Naive thymus-derived CD4-positive, alpha-beta T cell (primary cell): ENCODE measurements at regions of chr3 and their contacts with region 1.

Region 1: GRCh38 chr3:32460031-32460749 is 42.5 kb downstream of the CMTM6 start:
- DNase-seq: peak; percentile 52 to 95 (median 94)
- ATAC-seq: peak; percentile 87
- H3K4me3 ChIP-seq: peak overlapping the region; percentile 34
- H3K4me3 Mint-ChIP-seq: peak overlapping the region in 5 of 10 donors; percentile 25 to 92 (median 87)
- H3K27ac ChIP-seq: peak overlapping the region; percentile 97
- H3K27ac Mint-ChIP-seq: no peak overlapping the region
- H3K4me1 ChIP-seq: peaks cover 71 to 77% of the 10 kb centered on the region in 2 donors
- H3K4me1 Mint-ChIP-seq: peaks cover 30 to 45% (median 33%) of the 10 kb centered on the region in 7 donors
- H3K27me3 ChIP-seq: no peaks in the 10 kb centered on the region
- H3K27me3 Mint-ChIP-seq: no peaks in the 10 kb centered on the region

Region 2: DNA sequence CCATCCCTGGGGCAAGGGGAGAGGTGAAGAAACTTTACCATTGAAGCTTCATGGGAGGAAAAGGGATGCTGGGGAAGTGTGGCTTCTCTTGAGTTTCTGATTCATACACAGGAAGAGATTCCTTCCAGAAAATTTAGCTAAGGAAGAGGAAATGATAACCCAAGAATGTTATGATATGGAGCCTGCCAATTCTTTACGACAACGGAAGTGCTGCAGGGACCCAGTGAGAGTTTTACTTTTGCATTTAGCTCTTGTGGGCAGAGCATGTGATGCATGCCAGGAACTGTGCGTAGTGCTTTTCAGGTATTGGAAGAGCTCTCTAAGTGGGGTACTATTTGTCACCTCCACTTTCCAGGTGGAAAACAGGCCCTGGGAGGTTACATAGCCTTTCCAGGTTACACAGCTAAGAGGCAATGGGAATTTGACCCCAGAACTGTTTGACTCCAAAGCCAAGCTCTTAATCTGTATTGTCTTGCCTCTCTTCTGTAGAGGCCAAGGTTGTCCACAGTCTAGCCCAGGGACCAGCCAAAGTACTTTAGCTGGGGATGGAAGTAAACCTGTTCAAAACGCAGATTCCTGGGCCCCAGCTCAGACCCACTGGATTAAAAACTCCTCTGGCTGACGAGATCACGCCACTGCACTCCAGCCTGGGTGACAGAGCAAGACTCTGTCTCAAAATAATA is 45.5 kb before region 1 on chr3:
- CTCF ChIA-PET with region 1: interaction called, 7 read pairs
- POLR2A ChIA-PET with region 1: interaction called, 304 read pairs
- intact Hi-C with region 1: loop called (anchors 1 kb)
- DNase-seq: peak in 7 of 9 donors; percentile 61 to 78 (median 69)
- ATAC-seq: peak; percentile 94
- H3K4me3 ChIP-seq: no peak overlapping the region
- H3K4me3 Mint-ChIP-seq: peak overlapping the region; percentile 56 to 78 (median 68)
- H3K27ac ChIP-seq: peak overlapping the region; percentile 81
- H3K27ac Mint-ChIP-seq: peak overlapping the region; percentile 93 to 99 (median 98)
- H3K4me1 ChIP-seq: peaks cover 17 to 65% of the 10 kb centered on the region in 2 donors
- H3K4me1 Mint-ChIP-seq: peaks cover 52 to 96% (median 89%) of the 10 kb centered on the region in 7 donors
- H3K27me3 ChIP-seq: no peaks in the 10 kb centered on the region
- H3K27me3 Mint-ChIP-seq: no peaks in the 10 kb centered on the region

Region 3: DNA sequence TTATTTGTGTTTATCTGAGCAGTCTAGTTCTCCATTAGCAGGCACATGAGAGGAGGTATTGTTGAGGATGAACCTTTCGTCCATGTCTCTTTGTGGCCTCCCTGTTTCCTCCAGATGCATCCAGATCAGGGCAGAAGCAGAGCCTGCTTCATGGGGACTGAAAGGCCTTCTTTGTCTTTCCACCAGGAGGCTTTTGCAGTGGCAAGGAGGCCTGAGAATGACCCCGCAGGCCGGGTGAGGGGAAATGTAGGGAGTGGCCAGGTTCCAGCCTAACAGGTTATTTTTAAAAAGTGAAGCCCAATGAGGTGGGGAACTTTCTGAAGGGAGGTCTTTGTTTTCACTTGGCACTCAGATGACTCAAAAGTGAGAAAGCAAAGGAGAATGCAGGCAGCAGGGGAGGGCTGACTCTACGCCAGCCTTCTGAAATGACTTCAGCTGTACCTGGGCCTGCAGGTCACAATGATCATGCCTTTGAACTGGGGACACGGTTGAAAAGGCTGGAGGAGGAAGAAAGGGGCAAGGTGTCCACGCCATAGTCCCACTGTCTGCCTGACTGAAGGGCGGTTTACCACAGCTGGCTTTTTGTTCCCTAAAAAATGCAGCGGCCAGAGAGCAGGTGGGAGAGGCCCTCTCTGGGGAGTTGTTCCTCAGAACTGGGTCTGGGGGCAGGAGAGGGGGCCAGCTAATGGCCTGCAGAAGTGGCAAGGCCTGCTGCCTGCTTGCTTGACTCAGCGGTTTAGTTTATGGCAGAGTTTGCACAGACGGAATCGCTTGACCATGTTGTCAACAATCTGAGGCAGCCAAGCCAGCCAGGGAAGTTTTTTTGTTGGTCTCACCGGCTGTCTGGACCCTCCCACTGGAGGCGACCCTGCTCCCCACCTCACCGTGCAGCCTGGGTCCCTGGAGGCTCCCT is 39.8 kb before region 1 on chr3:
- CTCF ChIA-PET with region 1: interaction called, 8 read pairs
- POLR2A ChIA-PET with region 1: interaction called, 304 read pairs
- intact Hi-C with region 1: no loop called
- DNase-seq: peak in 1 of 9 donors; percentile 37
- ATAC-seq: peak; percentile 39
- H3K4me3 ChIP-seq: no peak overlapping the region
- H3K4me3 Mint-ChIP-seq: peak overlapping the region; percentile 58 to 84 (median 76)
- H3K27ac ChIP-seq: peak overlapping the region; percentile 68
- H3K27ac Mint-ChIP-seq: peak overlapping the region; percentile 76 to 99 (median 94)
- H3K4me1 ChIP-seq: peaks cover 30 to 91% of the 10 kb centered on the region in 2 donors
- H3K4me1 Mint-ChIP-seq: peaks cover 69 to 100% (median 97%) of the 10 kb centered on the region in 7 donors
- H3K27me3 ChIP-seq: no peaks in the 10 kb centered on the region
- H3K27me3 Mint-ChIP-seq: no peaks in the 10 kb centered on the region

Region 4: GRCh38 chr3:32428092-32429068 is 31.8 kb before region 1 on chr3:
- CTCF ChIA-PET with region 1: interaction called, 8 read pairs
- POLR2A ChIA-PET with region 1: interaction called, 304 read pairs
- intact Hi-C with region 1: loop called (anchors 1 kb)
- DNase-seq: peak in 7 of 9 donors; percentile 45 to 58 (median 56)
- ATAC-seq: peak; percentile 73
- H3K4me3 ChIP-seq: peak overlapping the region; percentile 30
- H3K4me3 Mint-ChIP-seq: peak overlapping the region; percentile 60 to 85 (median 81)
- H3K27ac ChIP-seq: peak overlapping the region; percentile 76
- H3K27ac Mint-ChIP-seq: peak overlapping the region; percentile 81 to 100 (median 98)
- H3K4me1 ChIP-seq: peaks cover 83% of the 10 kb centered on the region in 2 donors
- H3K4me1 Mint-ChIP-seq: peaks cover 64 to 100% (median 90%) of the 10 kb centered on the region in 7 donors
- H3K27me3 ChIP-seq: no peaks in the 10 kb centered on the region
- H3K27me3 Mint-ChIP-seq: no peaks in the 10 kb centered on the region

Region 5: DNA sequence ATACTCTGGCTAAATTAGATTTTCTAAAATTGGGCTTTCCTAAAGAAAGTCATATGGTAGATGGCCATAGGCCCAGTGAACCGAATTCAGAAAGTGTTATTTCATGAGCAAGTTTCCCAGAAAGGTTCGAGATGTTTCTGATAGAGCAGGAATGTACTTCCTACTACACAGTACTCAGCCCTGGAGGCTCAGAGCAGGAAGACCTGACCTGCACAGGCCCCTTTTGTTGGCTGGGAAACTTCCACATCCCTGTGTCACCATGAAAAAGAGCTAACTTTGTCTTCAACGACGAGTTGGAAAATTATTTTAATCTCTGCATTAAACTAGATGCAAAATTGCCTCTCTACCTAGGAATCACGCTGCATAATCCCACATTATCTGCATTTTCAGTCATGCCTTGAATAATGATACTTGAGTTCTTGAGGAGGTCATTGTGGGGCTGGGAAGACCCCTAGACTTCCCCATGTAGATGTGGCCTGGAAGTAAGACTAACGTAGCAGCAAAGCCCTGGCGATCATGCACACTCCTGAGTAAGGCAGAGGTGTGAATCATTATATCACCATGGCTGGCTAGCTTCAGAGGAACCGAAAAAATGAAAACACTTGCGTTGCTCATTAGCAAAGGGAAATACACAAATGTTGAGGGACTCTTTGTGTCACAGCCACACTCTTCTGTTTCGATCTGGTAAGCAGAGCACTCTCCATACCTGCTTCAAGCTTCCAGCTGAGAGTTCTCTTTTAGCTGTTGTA is 21.4 kb before region 1 on chr3:
- CTCF ChIA-PET with region 1: interaction called, 4 read pairs
- POLR2A ChIA-PET with region 1: interaction called, 145 read pairs
- intact Hi-C with region 1: loop called (anchors 1 kb)
- DNase-seq: peak in 1 of 9 donors; percentile 24
- ATAC-seq: peak; percentile 65
- H3K4me3 ChIP-seq: no peak overlapping the region
- H3K4me3 Mint-ChIP-seq: peak overlapping the region in 6 of 10 donors; percentile 1 to 80 (median 46)
- H3K27ac ChIP-seq: no peak overlapping the region
- H3K27ac Mint-ChIP-seq: peak overlapping the region; percentile 45 to 87 (median 80)
- H3K4me1 ChIP-seq: peaks cover 42 to 47% of the 10 kb centered on the region in 2 donors
- H3K4me1 Mint-ChIP-seq: peaks cover 29 to 88% (median 78%) of the 10 kb centered on the region in 7 donors
- H3K27me3 ChIP-seq: no peaks in the 10 kb centered on the region
- H3K27me3 Mint-ChIP-seq: no peaks in the 10 kb centered on the region

Region 6: GRCh38 chr3:32502118-32502945 is 42.1 kb after region 1 on chr3 and contains the start of gene CMTM6:
- CTCF ChIA-PET with region 1: no interaction called
- POLR2A ChIA-PET with region 1: interaction called, 3 read pairs
- intact Hi-C with region 1: loop called (anchors 1 to 2 kb)
- DNase-seq: peak; percentile 49 to 77 (median 70)
- ATAC-seq: peak; percentile 92
- H3K4me3 ChIP-seq: peak within 1 kb of the TSS; percentile 89
- H3K4me3 Mint-ChIP-seq: peak within 1 kb of the TSS; percentile 79 to 97 (median 93)
- H3K27ac ChIP-seq: peak within 1 kb of the TSS; percentile 98
- H3K27ac Mint-ChIP-seq: peak within 1 kb of the TSS; percentile 86 to 98 (median 90)
- H3K4me1 ChIP-seq: peaks cover 6 to 23% of the 10 kb centered on the region in 2 donors
- H3K4me1 Mint-ChIP-seq: peaks cover 28 to 48% (median 43%) of the 10 kb centered on the region in 7 donors
- H3K27me3 ChIP-seq: no peaks in the 10 kb centered on the region
- H3K27me3 Mint-ChIP-seq: peaks cover 0 to 4% (median 0%) of the 10 kb centered on the region in 5 donors
- total RNA-seq, gene CMTM6: 24.1 to 61.1 (median 38.1) TPM